SK-N-SH (cell line): ENCODE measurements at regions of chr22 and their contacts with region 1.

Region 1: DNA sequence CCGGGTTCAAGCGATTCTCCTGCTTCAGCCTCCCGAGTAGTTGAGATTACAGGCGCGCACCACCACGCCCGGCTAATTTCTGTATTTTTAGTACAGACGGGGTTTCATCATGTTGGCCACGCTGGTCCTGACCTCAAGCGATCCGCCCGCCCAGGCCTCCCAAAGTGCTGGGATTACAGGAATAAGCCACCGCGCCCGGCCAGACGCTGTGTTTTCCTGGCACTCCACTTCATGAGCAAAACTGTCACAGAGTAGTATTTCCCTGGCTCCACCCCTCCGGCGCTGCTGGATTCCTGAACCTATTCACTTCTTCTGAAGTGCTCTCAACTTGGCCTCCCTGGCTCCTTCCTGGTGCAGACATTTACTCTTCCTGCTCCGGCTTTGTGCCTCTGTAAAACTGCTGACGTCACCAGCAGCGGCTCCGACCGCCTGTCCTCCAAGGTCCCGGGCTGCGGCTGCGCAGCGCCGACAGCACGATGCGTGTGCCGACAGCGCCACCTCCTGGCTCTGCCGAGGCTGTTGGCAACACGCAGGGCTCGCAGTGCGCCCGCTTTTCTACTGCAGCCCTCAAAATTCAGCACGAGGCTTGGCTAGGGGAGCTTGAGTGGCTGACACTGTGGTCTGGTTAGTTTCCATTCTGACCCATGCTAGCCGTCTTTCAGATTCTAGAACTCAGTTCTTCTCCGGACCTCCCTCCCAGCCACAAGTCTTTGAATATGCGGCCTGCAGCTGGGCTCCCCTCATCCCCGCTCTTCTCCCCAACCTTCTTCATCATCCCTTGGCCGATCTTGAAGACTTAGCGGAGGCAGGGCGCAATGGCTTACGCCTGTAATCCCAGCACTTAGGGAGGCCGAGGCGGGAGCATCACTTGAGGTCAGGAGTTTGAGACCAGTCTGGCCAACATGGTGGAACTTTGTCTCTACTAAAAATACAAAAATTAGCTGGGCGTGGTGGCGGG is 36.6 kb downstream of the APOL3 start:
- DNase-seq: peak; percentile 92
- H3K4me3 ChIP-seq: no peak overlapping the region; a peak in 1 of 4 replicates
- H3K27ac ChIP-seq: peak overlapping the region; percentile 34 to 60; a peak in 2 of 4 replicates
- H3K4me1 ChIP-seq: peaks cover 0 to 3% of the 10 kb centered on the region in 2 experiments; a peak in 1 of 4 replicates
- H3K27me3 ChIP-seq: no peaks in the 10 kb centered on the region; the same call in 1 of the 2 replicates
- CTCF ChIP-seq: peak; percentile 95
- EP300 ChIP-seq: no peak
- RAD21 ChIP-seq: peak; percentile 100

Region 2: GRCh38 chr22:35627264-35628041 is 496.5 kb before region 1 on chr22:
- CTCF ChIA-PET with region 1: interaction called, 10 read pairs
- POLR2A ChIA-PET with region 1: interaction called, 5 read pairs
- DNase-seq: peak; percentile 68
- H3K4me3 ChIP-seq: no peak overlapping the region
- H3K27ac ChIP-seq: peak overlapping the region in 1 of 2 experiments; percentile 53; a peak in 2 of 4 replicates
- H3K4me1 ChIP-seq: peaks cover 15 to 19% of the 10 kb centered on the region in 2 experiments; a peak in 1 of 4 replicates
- H3K27me3 ChIP-seq: no peaks in the 10 kb centered on the region
- CTCF ChIP-seq: peak; percentile 52
- EP300 ChIP-seq: no peak
- RAD21 ChIP-seq: peak; percentile 78

Region 3: DNA sequence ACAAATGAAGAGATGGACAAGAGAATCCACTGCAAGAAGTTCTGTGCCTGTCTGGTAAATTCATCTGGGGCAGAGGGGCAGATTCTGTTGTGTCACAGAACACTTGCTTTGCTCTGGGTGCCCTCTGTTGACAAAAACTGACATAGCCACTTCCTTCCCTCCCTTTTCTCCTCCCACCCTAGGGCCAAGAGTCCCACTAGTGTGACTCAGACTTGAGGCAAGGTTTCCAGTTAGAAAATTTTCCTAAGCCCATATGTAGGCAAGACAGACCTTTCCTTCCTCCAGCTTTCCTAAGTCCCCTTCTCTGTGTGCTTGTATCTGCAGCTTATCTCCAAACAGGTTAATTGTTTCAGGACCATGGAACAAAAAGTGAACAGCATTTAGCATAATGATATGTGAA is 202.2 kb before region 1 on chr22:
- CTCF ChIA-PET with region 1: interaction called, 12 read pairs
- POLR2A ChIA-PET with region 1: no interaction called
- DNase-seq: peak; percentile 49
- H3K4me3 ChIP-seq: no peak overlapping the region; a peak in 1 of 4 replicates
- H3K27ac ChIP-seq: peak overlapping the region; percentile 47 to 72; a peak in 3 of 4 replicates
- H3K4me1 ChIP-seq: peaks cover 36% of the 10 kb centered on the region in 2 experiments; a peak in 3 of 4 replicates
- H3K27me3 ChIP-seq: no peaks in the 10 kb centered on the region
- CTCF ChIP-seq: peak; percentile 73
- EP300 ChIP-seq: no peak
- RAD21 ChIP-seq: peak; percentile 90

Region 4: DNA sequence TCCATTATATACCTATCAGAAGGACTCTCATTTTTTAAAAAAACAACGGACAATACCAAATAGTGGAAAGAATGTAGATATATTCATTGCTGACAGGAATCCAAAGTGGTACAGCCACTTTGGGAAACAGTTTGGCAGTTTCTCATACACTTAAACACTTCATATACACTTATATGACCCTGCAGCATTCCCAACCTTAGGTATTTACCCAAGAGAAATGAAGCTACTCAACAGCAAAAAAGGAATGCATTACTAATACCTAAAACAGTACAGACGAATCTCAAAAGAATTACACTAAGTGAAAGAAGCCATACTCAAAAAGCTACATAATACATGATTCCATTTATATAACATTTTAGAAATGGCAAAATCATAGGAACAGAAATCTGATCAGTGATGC is 146.8 kb before region 1 on chr22:
- CTCF ChIA-PET with region 1: no interaction called
- POLR2A ChIA-PET with region 1: no interaction called
- DNase-seq: no peak
- H3K4me3 ChIP-seq: no peak overlapping the region
- H3K27ac ChIP-seq: peak overlapping the region; percentile 41 to 60
- H3K4me1 ChIP-seq: peaks cover 41 to 57% of the 10 kb centered on the region in 2 experiments
- H3K27me3 ChIP-seq: no peaks in the 10 kb centered on the region
- CTCF ChIP-seq: no peak
- EP300 ChIP-seq: peak in 1 of 2 experiments; percentile 55; a peak in 2 of 4 replicates
- RAD21 ChIP-seq: no peak

Region 5: DNA sequence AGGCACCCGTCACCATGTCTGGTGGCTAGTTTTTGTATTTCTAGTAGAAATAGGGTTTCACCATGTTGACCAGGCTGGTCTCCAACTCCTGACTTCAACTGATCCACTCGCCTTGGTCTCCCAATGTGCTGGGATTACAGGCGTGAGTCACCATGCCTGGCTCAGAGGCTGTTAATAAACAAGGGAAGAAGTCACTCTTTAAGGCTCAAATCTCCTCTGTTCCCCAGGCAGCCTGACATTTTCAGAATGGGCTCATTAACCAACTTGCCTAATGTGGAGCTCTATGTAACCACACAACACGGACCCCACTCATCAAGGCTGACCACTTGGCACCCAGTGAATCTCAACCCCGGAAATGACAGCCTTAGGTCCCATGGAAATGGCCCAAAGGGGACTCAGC is 12.5 kb after region 1 on chr22:
- CTCF ChIA-PET with region 1: interaction called, 12 read pairs
- POLR2A ChIA-PET with region 1: no interaction called
- DNase-seq: no peak
- H3K4me3 ChIP-seq: no peak overlapping the region
- H3K27ac ChIP-seq: no peak overlapping the region
- H3K4me1 ChIP-seq: no peaks in the 10 kb centered on the region
- H3K27me3 ChIP-seq: peaks cover 16% of the 10 kb centered on the region; the same call in 1 of the 2 replicates
- CTCF ChIP-seq: no peak
- EP300 ChIP-seq: no peak
- RAD21 ChIP-seq: no peak